ENCODE measurements at regions of chr1 and their contacts with region 1.

Region 1: DNA sequence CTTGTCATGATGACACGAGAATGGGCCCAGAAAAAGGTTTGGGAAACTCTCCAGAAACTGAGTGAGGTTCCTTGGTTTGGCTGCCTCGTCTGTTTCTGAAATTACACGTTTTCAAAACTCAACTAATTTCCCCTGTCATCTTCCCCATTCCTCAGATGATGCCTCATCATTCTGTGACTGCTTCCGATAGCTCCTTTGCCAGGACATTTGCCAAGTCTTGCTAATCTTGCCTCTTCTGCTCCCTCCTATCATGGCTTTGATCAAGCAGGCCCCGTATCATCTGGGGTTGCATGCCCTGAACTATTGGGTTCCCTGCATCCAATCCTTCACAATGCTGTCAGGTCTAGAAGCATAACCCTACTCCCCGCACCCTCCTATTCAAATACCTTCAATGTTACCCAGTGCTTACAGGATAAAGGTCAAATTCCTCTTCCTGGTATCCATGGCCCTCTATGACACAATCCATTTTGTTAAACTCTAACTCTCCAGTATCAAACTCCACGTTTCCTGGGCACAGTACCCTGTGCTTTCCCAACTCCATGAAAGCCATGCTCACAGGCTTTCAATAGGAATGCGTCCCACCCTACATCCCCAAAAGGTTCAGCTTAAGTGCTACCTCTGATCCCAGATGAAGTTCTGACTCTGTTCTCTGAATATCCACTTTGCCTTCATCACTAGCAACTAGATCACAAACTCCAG is 22.2 kb upstream of the TMEM200B start:
- DNase-seq: peak; percentile 92
- ATAC-seq: peak; percentile 96
- H3K4me3 ChIP-seq: no peak overlapping the region
- H3K27ac ChIP-seq: peak overlapping the region; percentile 82
- H3K4me1 ChIP-seq: peaks cover 32% of the 10 kb centered on the region
- H3K27me3 ChIP-seq: no peaks in the 10 kb centered on the region
- CTCF ChIP-seq: 0 out of 2 replicates have a peak, but pooled peaks have one; percentile 8
- EP300 ChIP-seq: peak; percentile 61 to 78; a peak in 3 of 4 replicates
- POLR2A ChIP-seq: peak in 1 of 2 experiments; percentile 45; a peak in 1 of 4 replicates
- RAD21 ChIP-seq: no peak

Region 2: GRCh38 chr1:29124366-29125236 is 21.3 kb before region 1 on chr1:
- CTCF ChIA-PET with region 1: no interaction called
- POLR2A ChIA-PET with region 1: interaction called, 5 read pairs
- in situ Hi-C with region 1: no loop called
- intact Hi-C with region 1: loop called (anchors 1 kb)
- DNase-seq: peak; percentile 56
- ATAC-seq: peak; percentile 74
- H3K4me3 ChIP-seq: peak overlapping the region; percentile 76 to 89 (median 85)
- H3K27ac ChIP-seq: peak overlapping the region; percentile 13
- H3K4me1 ChIP-seq: peaks cover 22% of the 10 kb centered on the region
- H3K27me3 ChIP-seq: peaks cover 2 to 11% of the 10 kb centered on the region in 2 experiments; a peak in 2 of 5 replicates
- CTCF ChIP-seq: peak; percentile 66
- EP300 ChIP-seq: 0 out of 4 replicates have a peak, but pooled peaks of 1 of the 2 experiments have one; percentile 14
- POLR2A ChIP-seq: peak; percentile 21 to 27; a peak in 2 of 4 replicates
- RAD21 ChIP-seq: no peak

Region 3: DNA sequence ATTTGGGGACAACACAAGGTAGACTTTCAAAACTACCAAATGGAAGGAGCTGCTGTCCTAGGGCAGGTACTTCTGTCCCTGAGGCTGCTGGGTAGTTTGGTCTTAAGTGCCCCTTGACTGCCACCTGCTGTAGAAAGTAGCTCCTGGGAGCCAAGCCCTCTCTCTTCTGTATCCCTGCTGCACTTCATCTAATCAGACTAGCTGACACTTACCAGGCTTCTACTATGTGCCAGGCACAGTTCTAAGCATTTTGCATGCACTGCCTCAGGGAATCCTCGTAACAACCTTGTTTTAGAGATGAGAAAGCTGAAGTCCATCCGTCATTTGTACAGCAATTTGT is 51.7 kb after region 1 on chr1:
- CTCF ChIA-PET with region 1: no interaction called
- POLR2A ChIA-PET with region 1: no interaction called
- in situ Hi-C with region 1: no loop called
- intact Hi-C with region 1: loop called (anchors 1 kb)
- DNase-seq: peak; percentile 60
- ATAC-seq: peak; percentile 92
- H3K4me3 ChIP-seq: no peak overlapping the region
- H3K27ac ChIP-seq: no peak overlapping the region
- H3K4me1 ChIP-seq: peaks cover 12% of the 10 kb centered on the region
- H3K27me3 ChIP-seq: no peaks in the 10 kb centered on the region
- CTCF ChIP-seq: peak; percentile 77
- EP300 ChIP-seq: no peak
- POLR2A ChIP-seq: no peak
- RAD21 ChIP-seq: peak; percentile 66; the same call in 1 of the 2 replicates